ENCODE measurements at regions of chr13 and their contacts with region 1.

Region 1: DNA sequence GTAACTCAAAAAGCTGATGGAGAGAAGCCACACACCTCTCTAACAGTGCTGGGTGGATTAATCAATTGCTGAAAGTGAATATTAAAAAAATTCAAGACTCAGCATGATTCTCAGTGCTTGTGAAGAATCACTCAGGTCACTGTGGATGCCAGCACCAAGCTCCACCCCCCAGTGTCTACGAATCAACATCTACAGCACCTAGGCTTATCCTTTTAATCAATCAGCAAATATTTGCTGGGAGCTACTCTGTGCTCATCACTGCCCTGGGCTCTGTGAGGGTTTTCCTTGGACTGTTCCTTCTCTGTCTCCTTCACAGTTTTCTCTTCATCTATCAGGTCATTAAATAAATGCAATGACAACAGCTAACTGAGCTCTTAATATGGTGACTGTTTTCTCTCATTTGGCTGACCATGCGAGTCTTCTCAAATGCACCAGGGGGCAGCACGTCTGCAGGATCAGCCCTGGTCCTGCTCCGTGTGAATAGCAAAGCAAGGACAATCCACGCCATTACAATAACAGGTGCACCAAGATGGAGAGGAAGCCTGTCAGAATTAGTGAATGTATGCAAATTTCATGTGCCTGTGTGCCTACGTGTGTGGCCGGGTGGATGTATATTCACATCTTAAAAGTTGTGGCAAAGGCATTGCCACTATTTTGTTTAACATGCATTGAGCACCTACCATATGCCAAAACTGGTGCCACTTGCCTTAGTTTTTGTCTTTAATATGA is 14.6 kb upstream of the C13orf42 start:
- DNase-seq: peak; percentile 57
- CTCF ChIP-seq: peak; percentile 89

Region 2: DNA sequence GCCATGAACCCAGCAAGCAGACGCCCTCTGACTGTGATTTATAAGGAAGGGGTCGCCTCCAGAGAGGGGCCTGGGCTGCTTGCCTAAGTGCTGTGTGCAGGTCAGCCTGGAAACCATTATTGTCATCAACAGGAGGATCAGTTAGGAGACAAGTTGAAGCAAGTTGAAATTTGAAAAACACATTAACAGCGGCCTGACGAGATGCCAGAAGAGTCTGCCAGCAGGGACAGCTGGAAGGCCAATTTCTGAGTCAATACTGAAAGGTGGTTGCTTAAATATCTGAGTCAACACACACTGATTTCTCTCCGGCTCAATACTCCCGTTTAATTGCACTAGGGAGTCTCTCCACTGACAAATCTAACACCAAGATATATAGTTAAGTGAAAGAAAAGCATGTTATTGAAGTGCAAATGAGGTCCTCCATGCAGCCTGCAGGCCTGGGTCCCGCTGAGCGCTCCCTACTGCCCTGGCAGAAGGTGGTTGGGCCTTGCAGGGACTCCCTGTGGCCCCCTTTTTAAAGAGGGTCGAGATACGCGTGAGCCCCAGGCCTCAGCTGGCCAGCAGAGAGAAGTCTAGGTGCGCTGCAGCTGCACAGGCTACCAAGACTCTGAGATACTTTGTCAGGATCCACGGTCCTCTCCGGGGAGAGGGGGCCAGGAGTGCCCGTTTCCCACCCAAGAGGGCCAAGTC is 124.9 kb before region 1 on chr13:
- in situ Hi-C with region 1: no loop called
- DNase-seq: no peak
- CTCF ChIP-seq: no peak

Region 3: DNA sequence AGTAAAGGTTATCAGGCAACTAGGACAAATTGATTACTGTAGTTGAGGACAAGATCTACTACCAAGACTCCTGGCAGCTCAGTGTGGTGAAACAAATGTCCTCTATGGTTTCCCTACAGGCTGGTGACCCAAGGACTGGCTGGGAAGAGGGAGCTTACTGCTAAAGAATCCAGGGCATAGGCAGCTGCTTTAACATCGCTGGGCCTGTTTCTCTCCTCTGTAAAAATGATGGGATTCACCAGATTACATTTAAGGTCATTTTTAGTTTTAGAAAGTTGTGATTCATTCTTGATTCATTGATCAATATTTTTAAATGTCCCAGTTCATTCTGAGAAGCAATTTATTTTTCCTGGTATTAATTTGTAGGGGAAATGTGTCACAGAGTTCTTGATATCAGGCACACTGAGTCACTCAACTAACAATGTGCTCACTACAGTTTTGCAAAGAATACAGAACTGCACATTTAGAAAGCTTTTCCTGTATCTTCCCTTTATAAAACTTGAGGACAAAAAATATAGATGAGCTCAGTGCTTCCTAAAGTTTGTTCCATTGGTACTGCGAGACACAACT is 76.9 kb after region 1 on chr13:
- in situ Hi-C with region 1: no loop called
- DNase-seq: no peak
- CTCF ChIP-seq: no peak

Region 4: DNA sequence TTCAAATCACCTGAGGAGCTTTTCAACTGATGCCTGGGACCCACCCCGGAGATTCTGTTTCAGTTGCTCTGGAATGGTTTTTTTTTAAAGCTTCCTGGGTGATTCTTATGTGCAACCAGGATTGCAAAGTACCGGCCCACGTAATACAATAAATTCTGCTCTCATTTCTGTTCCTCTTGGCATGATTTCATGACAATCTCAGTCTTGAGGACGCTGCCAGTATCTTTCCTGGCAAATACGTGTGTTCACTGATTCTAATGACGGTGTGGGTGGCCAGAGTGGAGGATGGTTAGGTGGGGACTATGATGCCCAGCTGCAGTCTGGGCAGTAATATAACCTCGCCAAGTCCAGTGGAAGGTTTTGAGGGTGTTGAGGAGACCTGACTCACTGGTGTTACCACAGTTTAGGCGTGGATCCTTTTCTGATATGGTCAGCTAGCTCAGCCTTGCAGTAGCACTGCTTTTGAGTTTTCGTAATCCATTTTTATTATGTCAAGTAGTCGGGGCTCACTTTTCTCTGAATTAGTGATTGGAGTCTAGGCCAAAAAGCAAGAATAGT is 145.9 kb after region 1 on chr13:
- in situ Hi-C with region 1: loop called (anchors 10 kb)
- DNase-seq: no peak
- CTCF ChIP-seq: no peak

Measured in GM13976 (cell line).